ENCODE measurements at regions of chr18 and their contacts with region 1.

Region 1: GRCh38 chr18:24726727-24727492 is 266.5 kb downstream of the HRH4 start:
- DNase-seq: peak in 9 of 10 donors; percentile 35 to 78 (median 60)
- H3K4me3 ChIP-seq: peak overlapping the region in 54 of 59 donors; percentile 2 to 58 (median 36)
- H3K27ac ChIP-seq: peak overlapping the region in 4 of 59 donors; percentile 8 to 55 (median 44)
- H3K27me3 ChIP-seq: peaks cover 0 to 5% (median 0%) of the 10 kb centered on the region in 45 donors
- CTCF ChIP-seq: peak; percentile 72 to 96 (median 89)

Region 2: DNA sequence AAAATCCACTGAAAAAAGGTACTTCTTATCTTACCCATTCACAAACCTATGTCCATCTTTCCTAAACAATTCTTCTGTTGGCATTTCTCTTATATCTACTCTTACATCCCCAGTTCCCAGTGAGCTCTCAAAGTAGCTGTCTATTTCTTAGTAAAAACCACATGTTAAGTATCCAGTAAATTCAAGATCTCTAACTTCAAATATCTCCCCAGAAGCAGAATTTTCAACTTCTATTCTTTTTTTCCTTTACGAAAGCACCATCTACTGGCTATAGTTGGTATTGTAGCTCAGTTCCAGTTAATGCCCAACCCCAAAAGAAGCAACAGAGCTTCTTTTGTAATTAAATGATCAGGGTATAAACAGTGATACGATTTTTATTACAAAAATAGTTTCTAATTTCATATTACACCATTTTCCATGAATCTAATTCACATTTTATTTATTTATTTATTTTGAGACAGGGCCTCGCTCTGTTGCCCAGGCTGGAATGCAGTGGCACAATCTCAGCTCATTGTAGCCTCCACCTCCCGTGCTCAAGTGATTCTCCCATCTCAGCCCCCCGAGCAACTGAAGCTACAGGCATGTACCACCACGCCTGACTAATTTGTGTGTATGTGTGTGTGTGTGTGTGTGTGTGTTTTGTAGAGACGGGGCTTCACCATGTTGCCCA is 238.0 kb before region 1 on chr18:
- intact Hi-C with region 1: loop called (anchors 2 kb)
- DNase-seq: no peak
- H3K4me3 ChIP-seq: no peak overlapping the region
- H3K27ac ChIP-seq: no peak overlapping the region
- H3K27me3 ChIP-seq: no peaks in the 10 kb centered on the region
- CTCF ChIP-seq: peak; percentile 77 to 96 (median 89)

Region 3: DNA sequence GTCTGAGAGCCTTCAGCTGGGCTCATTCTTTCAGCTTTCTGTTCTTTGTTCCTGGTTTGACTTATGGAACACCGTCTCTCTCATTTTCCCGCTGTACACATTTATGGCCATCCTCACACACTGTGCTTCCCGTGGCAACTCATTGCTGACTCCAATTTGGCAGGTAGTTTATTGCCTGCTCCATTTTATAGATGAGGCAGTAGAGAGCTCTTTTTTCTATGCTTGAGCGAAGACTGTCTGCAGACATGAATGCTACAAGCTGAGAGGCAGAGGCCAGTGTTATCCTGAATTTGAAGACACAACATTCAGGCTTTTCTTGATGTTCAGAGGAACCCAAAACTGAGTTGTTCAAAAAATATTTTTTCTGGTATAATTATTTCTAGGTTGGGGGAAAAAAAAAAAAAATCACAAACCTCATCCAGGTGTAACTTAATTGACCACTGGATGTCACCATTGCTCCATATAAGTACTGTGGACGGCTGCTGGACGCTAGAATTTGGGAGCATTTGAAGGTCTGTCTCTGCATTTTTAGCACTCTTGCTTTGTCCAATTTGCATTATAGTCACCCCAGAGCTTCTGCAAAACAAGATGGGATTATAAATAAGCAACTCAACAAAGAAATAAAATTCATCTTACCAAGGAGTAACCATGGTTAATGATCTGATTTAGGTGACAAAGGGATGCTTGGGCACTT is 183.0 kb before region 1 on chr18:
- intact Hi-C with region 1: loop called (anchors 5 kb)
- DNase-seq: peak in 1 of 10 donors; percentile 48
- H3K4me3 ChIP-seq: peak overlapping the region in 10 of 59 donors; percentile 3 to 41 (median 14)
- H3K27ac ChIP-seq: peak overlapping the region in 34 of 59 donors; percentile 0 to 87 (median 51)
- H3K27me3 ChIP-seq: no peaks in the 10 kb centered on the region
- CTCF ChIP-seq: peak in 55 of 56 donors; percentile 30 to 77 (median 59)

Region 4: DNA sequence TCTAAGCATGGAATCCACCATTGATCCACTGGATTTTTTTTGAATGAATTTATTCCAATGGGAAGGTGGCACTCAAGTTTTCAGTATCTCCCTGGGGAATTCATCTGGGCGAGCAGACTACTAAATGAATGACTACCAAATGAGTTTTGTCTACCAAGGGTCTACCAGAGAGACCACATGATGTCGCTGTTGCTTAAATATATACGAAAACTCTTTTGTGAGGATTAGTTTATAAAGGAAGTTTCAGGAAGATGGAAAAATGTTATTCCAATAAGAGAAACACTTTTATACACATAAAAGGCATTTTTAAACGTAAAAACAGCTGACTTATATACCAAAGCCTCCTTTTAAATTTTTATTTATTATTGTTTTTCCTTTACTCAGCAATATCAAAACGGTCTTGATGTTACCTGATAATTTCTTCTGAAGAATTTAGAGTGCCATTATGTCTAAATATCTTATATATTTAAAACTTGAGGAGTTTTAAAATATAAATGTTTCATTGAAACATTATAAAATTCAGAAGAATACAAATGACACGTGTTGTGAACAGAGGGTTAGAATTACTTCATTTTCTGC is 126.7 kb before region 1 on chr18:
- intact Hi-C with region 1: loop called (anchors 2 to 5 kb)
- DNase-seq: peak in 1 of 10 donors; percentile 28
- H3K4me3 ChIP-seq: no peak overlapping the region
- H3K27ac ChIP-seq: no peak overlapping the region
- H3K27me3 ChIP-seq: peaks cover 0 to 9% (median 0%) of the 10 kb centered on the region in 45 donors
- CTCF ChIP-seq: peak; percentile 44 to 87 (median 72)

Measured in dorsolateral prefrontal cortex (tissue), 120 donors.